Ascending aorta (tissue), 2 donors: ENCODE measurements at regions of chr9 and their contacts with region 1.

Region 1: DNA sequence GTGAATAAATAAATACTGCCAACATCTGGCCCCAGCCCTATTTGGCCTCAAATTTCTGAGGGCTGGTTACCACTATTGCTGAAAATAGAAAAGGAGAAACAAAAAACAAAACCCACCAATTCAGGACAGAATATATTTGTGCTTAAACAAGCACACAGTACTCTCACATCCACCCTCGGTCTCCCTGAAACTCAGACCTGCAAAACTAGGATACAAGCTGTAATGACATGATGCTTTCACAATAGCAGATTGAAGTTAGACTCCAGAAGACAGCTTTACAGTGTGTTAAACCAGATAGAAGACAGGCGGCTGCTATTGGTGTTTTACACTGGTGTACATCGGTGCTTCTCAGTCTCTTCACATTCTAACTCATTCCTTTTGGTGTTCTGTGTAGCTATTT is 214.9 kb upstream of the DMRT1 start:
- DNase-seq: no peak
- H3K4me3 ChIP-seq: peak overlapping the region in 1 of 2 donors; percentile 30
- H3K27ac ChIP-seq: peak overlapping the region; percentile 85 to 88
- H3K4me1 ChIP-seq: peaks cover 11 to 39% of the 10 kb centered on the region in 2 donors
- H3K27me3 ChIP-seq: no peaks in the 10 kb centered on the region
- CTCF ChIP-seq: no peak

Region 2: DNA sequence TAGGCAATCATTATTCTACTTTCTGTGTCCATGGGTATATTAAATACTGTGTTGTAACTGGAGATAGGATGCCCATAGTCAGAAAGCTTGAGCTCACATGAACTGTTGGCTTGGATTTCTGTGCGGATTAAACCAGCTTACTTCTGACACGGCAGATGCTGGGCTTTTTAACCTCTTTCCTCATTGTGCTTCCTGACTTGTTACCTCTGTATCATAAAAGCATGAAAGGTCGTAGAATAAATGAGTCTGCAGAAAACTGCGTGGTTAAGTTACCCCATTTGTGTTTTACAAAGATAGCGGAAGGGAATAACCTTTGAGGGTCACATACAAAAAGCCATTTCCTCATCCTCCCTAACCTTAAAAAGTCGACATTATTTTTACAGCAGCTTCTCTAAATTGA is 15.4 kb after region 1 on chr9:
- intact Hi-C with region 1: loop called (anchors 2 kb)
- DNase-seq: no peak
- H3K4me3 ChIP-seq: no peak overlapping the region
- H3K27ac ChIP-seq: peak overlapping the region; percentile 77 to 83
- H3K4me1 ChIP-seq: peaks cover 0 to 21% of the 10 kb centered on the region in 2 donors
- H3K27me3 ChIP-seq: no peaks in the 10 kb centered on the region
- CTCF ChIP-seq: no peak

Region 3: GRCh38 chr9:677461-678097 is 51.0 kb after region 1 on chr9:
- intact Hi-C with region 1: loop called (anchors 2 kb)
- DNase-seq: no peak
- H3K4me3 ChIP-seq: peak overlapping the region; percentile 58 to 67
- H3K27ac ChIP-seq: peak overlapping the region; percentile 69 to 82
- H3K4me1 ChIP-seq: peaks cover 0 to 7% of the 10 kb centered on the region in 2 donors
- H3K27me3 ChIP-seq: no peaks in the 10 kb centered on the region
- CTCF ChIP-seq: no peak

Region 4: GRCh38 chr9:694403-695154 is 68.0 kb after region 1 on chr9:
- intact Hi-C with region 1: no loop called
- DNase-seq: peak in 1 of 2 donors; percentile 88
- H3K4me3 ChIP-seq: peak overlapping the region; percentile 47 to 65
- H3K27ac ChIP-seq: peak overlapping the region; percentile 86 to 95
- H3K4me1 ChIP-seq: peaks cover 39 to 73% of the 10 kb centered on the region in 2 donors
- H3K27me3 ChIP-seq: no peaks in the 10 kb centered on the region
- CTCF ChIP-seq: no peak